Dorsolateral prefrontal cortex (tissue), 120 donors: ENCODE measurements at regions of chr19 and their contacts with region 1.

Region 1: DNA sequence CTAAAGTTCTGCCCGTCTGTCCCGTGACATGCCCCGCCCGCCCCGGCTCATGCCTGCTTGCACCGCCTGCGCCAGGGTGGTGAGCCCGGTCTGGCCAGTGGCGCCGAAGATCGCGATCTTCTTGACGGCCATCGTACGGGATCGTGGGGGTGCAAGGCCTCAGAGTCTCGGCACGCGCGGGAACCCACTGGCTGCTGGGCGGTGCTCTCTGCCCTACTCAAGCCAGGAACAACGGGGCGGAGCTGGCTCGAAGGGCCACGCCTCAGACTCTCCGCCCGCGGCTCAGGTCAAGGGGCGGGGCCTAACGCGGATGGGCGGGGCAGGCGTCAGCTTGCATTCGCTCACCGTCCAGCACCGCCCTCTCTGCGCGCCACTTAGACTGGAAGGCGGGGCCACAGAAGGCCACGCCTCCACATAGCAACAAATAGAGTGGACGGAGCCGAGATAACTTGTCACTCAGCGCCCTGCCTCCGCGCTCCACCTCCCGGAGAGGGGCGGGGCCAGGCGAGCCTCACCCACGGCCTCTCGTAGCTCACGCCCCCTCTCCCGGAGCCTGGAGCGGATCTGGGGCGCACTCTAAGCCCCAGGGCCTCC is at the start of gene BLVRB:
- DNase-seq: peak; percentile 99 to 100 (median 100)
- H3K4me3 ChIP-seq: peak within 1 kb of the TSS; percentile 41 to 97 (median 78)
- H3K27ac ChIP-seq: peak within 1 kb of the TSS; percentile 26 to 95 (median 81)
- H3K27me3 ChIP-seq: no peaks in the 10 kb centered on the region
- CTCF ChIP-seq: peak in 31 of 56 donors; percentile 8 to 64 (median 29)
- total RNA-seq, gene BLVRB: 22.5 to 59.4 (median 36.1) TPM

Region 2: GRCh38 chr19:40444192-40445028 is 21.2 kb before region 1 on chr19 and contains the start of gene SERTAD3:
- intact Hi-C with region 1: loop called in 1 of 2 experiments (anchors 1 kb)
- DNase-seq: peak; percentile 93 to 99 (median 95)
- H3K4me3 ChIP-seq: peak within 1 kb of the TSS; percentile 50 to 94 (median 83)
- H3K27ac ChIP-seq: peak within 1 kb of the TSS; percentile 82 to 99 (median 97)
- H3K27me3 ChIP-seq: no peaks in the 10 kb centered on the region
- CTCF ChIP-seq: peak in 36 of 56 donors; percentile 5 to 54 (median 24)
- total RNA-seq, gene SERTAD3: 3.5 to 29.8 (median 9.8) TPM

Region 3: DNA sequence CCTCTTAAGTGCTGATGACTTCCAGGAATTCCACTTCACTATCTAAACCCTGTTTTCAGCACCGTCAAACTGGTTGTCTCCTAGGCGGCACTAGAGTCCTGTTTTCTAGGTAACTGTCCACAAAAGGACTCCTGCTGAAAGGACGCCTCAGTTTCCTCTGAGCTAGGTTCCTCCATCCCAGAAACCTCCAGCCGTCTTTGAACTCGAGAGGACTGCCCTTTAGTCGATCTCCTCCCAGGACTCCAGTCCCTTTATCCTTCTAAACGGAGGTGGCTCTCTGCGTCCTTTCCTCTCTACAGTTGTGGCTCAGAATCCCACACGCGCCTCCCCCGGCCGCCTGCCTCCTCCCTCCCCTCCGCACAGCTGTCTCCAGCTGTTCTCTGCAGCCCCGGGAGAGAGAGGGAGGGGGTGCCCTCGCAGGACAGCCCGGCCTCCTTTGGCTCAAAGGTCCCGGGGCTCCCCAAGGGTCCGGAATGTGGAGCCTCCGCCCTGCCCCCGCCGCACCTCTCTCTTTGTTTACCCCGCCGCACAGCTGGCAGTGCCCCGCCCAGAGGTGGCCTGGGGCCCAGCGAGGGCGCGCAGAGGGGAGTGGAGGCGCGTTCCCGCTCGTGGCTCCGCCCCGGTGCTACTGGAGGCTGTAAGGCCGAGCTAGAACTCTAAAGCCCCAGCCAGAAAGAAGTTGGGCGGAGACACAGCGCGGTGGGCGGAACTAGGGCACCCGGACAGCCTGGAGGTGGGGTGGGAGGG is 137.9 kb after region 1 on chr19:
- intact Hi-C with region 1: loop called (anchors 2 to 10 kb)
- DNase-seq: peak; percentile 71 to 95 (median 88)
- H3K4me3 ChIP-seq: peak overlapping the region; percentile 20 to 72 (median 53)
- H3K27ac ChIP-seq: peak overlapping the region in 53 of 59 donors; percentile 4 to 88 (median 75)
- H3K27me3 ChIP-seq: peaks cover 0 to 28% (median 0%) of the 10 kb centered on the region in 45 donors
- CTCF ChIP-seq: peak in 19 of 56 donors; percentile 9 to 54 (median 19)

Region 4: GRCh38 chr19:40633207-40633606 is 167.6 kb after region 1 on chr19:
- intact Hi-C with region 1: loop called in 1 of 2 experiments (anchors 2 kb)
- DNase-seq: no peak
- H3K4me3 ChIP-seq: no peak overlapping the region
- H3K27ac ChIP-seq: no peak overlapping the region
- H3K27me3 ChIP-seq: peaks cover 0 to 2% (median 0%) of the 10 kb centered on the region in 45 donors
- CTCF ChIP-seq: no peak